ENCODE measurements at regions of chr7 and their contacts with region 1.

Region 1: GRCh38 chr7:158782761-158783401 is 46.4 kb downstream of the ESYT2 start:
- DNase-seq: peak; percentile 85 to 89
- ATAC-seq: peak; percentile 91
- H3K4me3 ChIP-seq: no peak overlapping the region
- H3K27ac ChIP-seq: peak overlapping the region; percentile 63 to 93
- H3K4me1 ChIP-seq: peaks cover 0 to 5% of the 10 kb centered on the region in 2 donors
- H3K27me3 ChIP-seq: no peaks in the 10 kb centered on the region

Region 2: DNA sequence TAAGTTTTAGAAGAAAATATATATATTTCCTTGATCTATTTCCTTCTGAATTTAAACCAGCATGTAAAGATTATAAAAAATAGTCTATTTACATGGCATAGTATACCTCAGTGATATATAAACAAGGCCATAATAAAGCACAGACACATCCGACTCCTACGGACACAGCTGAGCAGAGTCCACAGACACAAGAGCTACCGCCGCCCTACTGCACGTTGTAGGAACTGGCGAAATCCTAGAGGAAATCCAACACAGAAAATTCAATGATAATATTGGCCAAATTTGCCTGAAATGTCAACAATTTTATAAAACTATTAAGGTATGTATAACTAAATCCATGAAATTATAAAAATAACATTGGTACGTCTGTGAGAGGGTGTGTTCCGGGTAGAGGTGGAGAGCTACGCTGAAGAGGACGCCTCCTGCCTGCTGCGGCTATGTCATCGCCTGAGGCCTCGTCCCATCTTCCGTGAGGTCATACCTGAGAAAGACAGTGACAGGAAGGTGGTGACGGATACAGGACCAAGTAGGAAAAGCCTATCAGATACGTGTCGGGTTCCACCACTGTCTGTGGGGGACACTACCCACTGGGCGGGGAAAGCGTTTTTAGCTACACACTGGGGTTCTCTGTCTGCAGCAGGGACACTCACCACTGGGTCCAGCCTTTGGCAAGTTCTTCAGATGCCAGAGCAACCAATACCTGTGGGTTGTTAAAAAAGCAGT is 48.9 kb before region 1 on chr7:
- intact Hi-C with region 1: no loop called
- DNase-seq: no peak
- ATAC-seq: no peak
- H3K4me3 ChIP-seq: no peak overlapping the region
- H3K27ac ChIP-seq: no peak overlapping the region
- H3K4me1 ChIP-seq: no peaks in the 10 kb centered on the region
- H3K27me3 ChIP-seq: no peaks in the 10 kb centered on the region

Region 3: GRCh38 chr7:158760936-158761335 is 21.9 kb before region 1 on chr7:
- intact Hi-C with region 1: no loop called
- DNase-seq: no peak
- ATAC-seq: no peak
- H3K4me3 ChIP-seq: no peak overlapping the region
- H3K27ac ChIP-seq: no peak overlapping the region
- H3K4me1 ChIP-seq: no peaks in the 10 kb centered on the region
- H3K27me3 ChIP-seq: no peaks in the 10 kb centered on the region

Region 4: DNA sequence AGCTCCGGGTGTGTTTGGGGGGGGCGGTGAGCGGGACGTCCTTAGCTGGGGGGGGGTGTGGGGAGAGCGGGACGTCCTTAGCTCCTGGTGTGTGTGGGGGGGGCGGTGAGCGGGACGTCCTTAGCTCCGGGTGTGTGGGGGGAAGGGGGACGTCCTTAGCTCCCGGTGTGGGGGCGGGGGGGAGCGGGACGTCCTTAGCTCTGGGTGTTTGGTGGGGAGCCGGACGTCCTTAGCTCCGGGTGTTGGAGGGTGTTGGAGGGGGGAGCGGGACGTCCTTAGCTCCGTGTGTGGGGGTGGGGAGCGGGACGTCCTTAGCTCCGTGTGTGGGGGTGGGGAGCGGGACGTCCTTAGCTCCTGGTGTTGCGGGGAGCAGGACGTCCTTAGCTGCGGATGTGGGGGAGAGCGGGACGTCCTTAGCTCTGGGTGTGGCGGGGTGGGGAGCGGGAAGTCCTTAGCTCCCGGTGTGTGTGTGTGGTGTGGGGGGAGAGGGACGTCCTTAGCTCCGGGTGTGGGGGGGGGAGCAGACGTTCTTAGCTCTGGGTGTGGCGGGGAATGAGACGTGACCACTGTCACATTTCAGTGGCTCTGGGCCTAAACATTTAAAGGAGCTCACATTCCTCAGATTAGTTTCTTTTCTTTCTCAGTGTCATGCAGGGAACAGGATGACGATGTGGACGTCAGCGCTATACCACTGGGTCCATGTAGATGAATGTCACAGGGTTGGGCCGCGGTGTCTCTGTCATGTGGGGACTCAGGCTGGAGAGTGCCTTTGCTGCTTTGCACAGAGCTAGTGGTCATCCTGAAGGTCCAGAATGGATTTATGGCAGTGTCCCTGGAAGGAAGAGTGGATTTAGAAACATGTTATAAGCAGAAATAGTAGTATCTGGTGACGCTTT is 81.0 kb after region 1 on chr7:
- intact Hi-C with region 1: loop called in 1 of 2 experiments (anchors 10 kb)
- DNase-seq: peak; percentile 86
- ATAC-seq: peak; percentile 87
- H3K4me3 ChIP-seq: peak overlapping the region; percentile 47 to 50
- H3K27ac ChIP-seq: peak overlapping the region in 1 of 2 donors; percentile 51
- H3K4me1 ChIP-seq: no peaks in the 10 kb centered on the region
- H3K27me3 ChIP-seq: no peaks in the 10 kb centered on the region

Measured in aorta (tissue), 5 donors.